Breast epithelium (tissue), 4 donors: ENCODE measurements at regions of chrX and their contacts with region 1.

Region 1: GRCh38 chrX:40809210-40809609 is 73.9 kb upstream of the MED14 start:
- DNase-seq: no peak
- H3K4me3 ChIP-seq: no peak overlapping the region
- H3K27ac ChIP-seq: no peak overlapping the region
- H3K4me1 ChIP-seq: no peaks in the 10 kb centered on the region
- H3K27me3 ChIP-seq: peaks cover 0 to 16% of the 10 kb centered on the region in 2 donors
- CTCF ChIP-seq: no peak
- POLR2A ChIP-seq: no peak

Region 2: GRCh38 chrX:39336671-39337311 is 1472.4 kb before region 1 on chrX:
- intact Hi-C with region 1: loop called (anchors 5 kb)
- DNase-seq: no peak
- H3K4me3 ChIP-seq: peak overlapping the region in 1 of 3 donors; percentile 19
- H3K27ac ChIP-seq: peak overlapping the region; percentile 65 to 73
- H3K4me1 ChIP-seq: no peaks in the 10 kb centered on the region
- H3K27me3 ChIP-seq: peaks cover 0 to 61% of the 10 kb centered on the region in 2 donors
- CTCF ChIP-seq: no peak
- POLR2A ChIP-seq: no peak

Region 3: GRCh38 chrX:40083120-40083978 is 725.9 kb before region 1 on chrX:
- intact Hi-C with region 1: no loop called
- DNase-seq: no peak
- H3K4me3 ChIP-seq: peak overlapping the region; percentile 32 to 63 (median 47)
- H3K27ac ChIP-seq: peak overlapping the region in 1 of 2 donors; percentile 14
- H3K4me1 ChIP-seq: no peaks in the 10 kb centered on the region
- H3K27me3 ChIP-seq: peaks cover 0 to 77% of the 10 kb centered on the region in 2 donors
- CTCF ChIP-seq: no peak
- POLR2A ChIP-seq: no peak

Region 4: DNA sequence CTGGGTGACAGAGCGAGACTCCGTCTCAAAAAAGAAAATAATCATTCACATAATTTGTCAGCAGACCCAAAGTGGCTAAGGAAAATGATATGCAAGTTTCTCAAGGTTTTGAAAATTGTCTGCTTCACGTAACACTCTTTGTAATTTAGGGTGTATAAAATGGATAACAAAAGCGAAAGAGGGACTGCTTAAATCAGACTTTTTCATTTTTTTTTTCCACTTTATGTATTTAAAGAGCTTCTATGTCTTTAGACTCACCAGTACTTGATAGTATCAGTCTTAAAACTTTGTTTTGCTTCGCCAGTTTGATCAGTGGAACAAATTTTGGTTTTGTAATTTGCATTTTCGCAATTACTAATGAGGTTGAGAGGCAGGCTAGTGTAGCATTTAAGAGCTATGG is 310.6 kb after region 1 on chrX:
- intact Hi-C with region 1: loop called (anchors 5 kb)
- DNase-seq: no peak
- H3K4me3 ChIP-seq: no peak overlapping the region
- H3K27ac ChIP-seq: no peak overlapping the region
- H3K4me1 ChIP-seq: no peaks in the 10 kb centered on the region
- H3K27me3 ChIP-seq: peaks cover 0 to 9% of the 10 kb centered on the region in 2 donors
- CTCF ChIP-seq: no peak
- POLR2A ChIP-seq: no peak